A549 (cell line): ENCODE measurements at regions of chr1 and their contacts with region 1.

Region 1: DNA sequence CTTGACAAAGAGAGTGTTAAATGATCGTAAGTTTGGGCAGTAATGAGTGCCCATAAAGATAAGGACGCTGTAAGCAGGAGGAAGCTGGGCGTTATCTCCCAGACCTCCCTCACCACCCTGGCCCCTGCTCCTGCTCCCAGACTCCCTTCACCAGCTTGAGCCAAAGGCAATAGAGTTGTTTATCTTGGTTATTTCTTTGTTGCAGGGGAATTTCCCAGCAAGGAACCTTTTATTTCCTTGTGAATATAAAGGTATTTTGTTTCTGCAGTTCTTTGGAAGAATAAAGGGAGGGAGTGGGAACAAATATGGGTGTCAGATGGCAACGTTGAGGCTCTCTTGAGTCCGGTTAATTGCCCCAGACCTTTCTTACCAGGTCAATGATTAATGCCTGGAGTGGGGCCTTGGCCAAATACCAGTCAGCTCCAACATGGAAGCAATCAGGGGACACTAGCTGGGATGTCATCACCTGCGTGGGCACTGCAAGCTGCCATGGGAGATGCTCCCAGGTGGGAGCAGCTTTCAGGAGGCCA is 4.3 kb downstream of the PIGR start:
- DNase-seq: no peak
- ATAC-seq: no peak
- H3K4me3 ChIP-seq: no peak overlapping the region
- H3K27ac ChIP-seq: no peak overlapping the region
- H3K4me1 ChIP-seq: peaks cover 5% of the 10 kb centered on the region; the same call in 1 of the 3 replicates
- CTCF ChIP-seq: no peak
- EP300 ChIP-seq: no peak
- POLR2A ChIP-seq: no peak
- RAD21 ChIP-seq: no peak

Region 2: DNA sequence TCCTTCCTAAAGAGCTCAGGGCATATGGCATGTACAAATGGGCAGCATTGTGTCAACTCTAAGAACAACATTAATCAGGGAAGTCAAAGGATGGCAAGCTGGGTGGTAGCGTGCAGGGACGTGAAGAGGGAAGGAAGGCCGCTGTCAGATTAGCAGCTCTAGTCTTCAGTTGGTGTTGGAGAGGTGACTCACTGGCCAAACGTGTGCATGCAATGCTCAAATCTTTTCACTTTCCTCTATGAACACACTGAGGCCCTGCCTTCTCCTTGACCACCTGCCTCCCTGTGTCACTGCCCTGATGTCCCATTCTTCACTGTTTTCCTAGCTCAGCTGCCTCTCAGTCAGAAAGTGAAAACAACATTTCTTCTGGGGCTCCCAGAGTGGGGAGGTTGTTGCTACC is 10.2 kb after region 1 on chr1:
- CTCF ChIA-PET with region 1: interaction called, 10 read pairs
- POLR2A ChIA-PET with region 1: no interaction called
- DNase-seq: peak; percentile 33 to 48
- ATAC-seq: peak; percentile 71 to 77; a peak in 5 of 6 replicates
- H3K4me3 ChIP-seq: 0 out of 3 replicates have a peak overlapping the region, but pooled peaks have one; percentile 8
- H3K27ac ChIP-seq: peak overlapping the region; percentile 79 to 86
- H3K4me1 ChIP-seq: peaks cover 26% of the 10 kb centered on the region
- CTCF ChIP-seq: no peak
- EP300 ChIP-seq: no peak
- POLR2A ChIP-seq: no peak
- RAD21 ChIP-seq: no peak